Naive thymus-derived CD4-positive, alpha-beta T cell (primary cell): ENCODE measurements at regions of chr7 and their contacts with region 1.

Region 1: DNA sequence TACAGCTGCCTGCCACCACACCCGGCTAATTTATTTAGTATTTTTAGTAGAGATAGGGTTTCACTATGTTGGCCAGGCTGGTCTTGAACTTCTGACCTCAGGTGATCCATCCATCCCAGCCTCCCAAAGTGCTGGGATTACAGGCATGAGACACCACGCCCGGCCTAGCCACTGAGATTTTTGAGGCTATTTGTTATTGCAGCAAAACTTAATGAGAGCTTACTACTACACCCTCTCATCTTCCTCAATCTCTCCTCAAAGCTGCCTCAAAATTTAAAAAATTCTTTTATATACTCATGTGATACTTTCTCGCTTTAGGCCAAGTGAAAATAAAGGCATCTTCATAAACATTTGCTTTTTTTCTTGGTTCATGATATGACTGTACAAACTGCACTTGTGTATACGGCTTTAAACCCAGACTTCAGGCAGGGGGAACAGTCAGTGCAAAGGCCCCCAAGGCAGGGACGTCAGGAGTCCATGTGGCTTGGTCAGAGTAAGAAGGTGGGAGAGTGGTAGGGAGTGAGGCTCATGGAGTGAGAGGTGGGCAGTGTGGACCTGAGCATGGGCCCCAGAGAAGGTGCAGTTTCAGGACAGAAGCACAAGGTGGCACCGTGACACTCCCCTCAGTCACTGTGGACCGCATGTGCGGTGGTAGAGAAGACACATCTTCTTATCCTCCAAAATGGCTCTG is 55.5 kb downstream of the SYPL1 start:
- DNase-seq: peak; percentile 42 to 76 (median 68)
- ATAC-seq: peak; percentile 97
- H3K4me3 ChIP-seq: no peak overlapping the region
- H3K4me3 Mint-ChIP-seq: peak overlapping the region in 3 of 10 donors; percentile 38 to 66 (median 49)
- H3K27ac ChIP-seq: no peak overlapping the region
- H3K27ac Mint-ChIP-seq: peak overlapping the region in 5 of 9 donors; percentile 6 to 56 (median 28)
- H3K4me1 ChIP-seq: peaks cover 0 to 12% of the 10 kb centered on the region in 2 donors
- H3K4me1 Mint-ChIP-seq: peaks cover 10 to 30% (median 19%) of the 10 kb centered on the region in 7 donors
- H3K27me3 ChIP-seq: no peaks in the 10 kb centered on the region
- H3K27me3 Mint-ChIP-seq: peaks cover 0 to 18% (median 0%) of the 10 kb centered on the region in 5 donors

Region 2: DNA sequence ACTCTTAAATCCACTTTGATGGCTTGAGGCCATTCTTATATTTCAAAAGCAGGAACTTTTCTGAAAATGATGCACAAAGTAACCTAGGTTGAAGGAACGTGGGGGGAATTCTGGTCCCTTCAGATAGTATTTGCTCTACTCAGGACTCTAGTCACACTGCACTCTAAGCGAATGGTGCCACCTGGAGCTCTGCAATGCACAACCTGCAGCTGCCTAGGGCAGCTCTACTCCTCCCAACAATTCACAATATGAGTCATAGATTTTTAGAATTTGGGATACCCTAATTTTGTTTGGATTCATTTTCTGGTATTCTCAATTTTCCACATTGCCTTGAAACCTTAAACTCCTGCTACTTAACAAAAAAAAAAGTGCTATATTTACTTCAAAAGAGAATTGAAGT is 38.1 kb after region 1 on chr7:
- CTCF ChIA-PET with region 1: interaction called, 4 read pairs
- POLR2A ChIA-PET with region 1: no interaction called
- intact Hi-C with region 1: loop called in 1 of 2 experiments (anchors 1 kb)
- DNase-seq: no peak
- ATAC-seq: no peak
- H3K4me3 ChIP-seq: no peak overlapping the region
- H3K4me3 Mint-ChIP-seq: no peak overlapping the region
- H3K27ac ChIP-seq: no peak overlapping the region
- H3K27ac Mint-ChIP-seq: peak overlapping the region in 2 of 9 donors; percentile 15 to 68
- H3K4me1 ChIP-seq: no peaks in the 10 kb centered on the region
- H3K4me1 Mint-ChIP-seq: peaks cover 4 to 19% (median 11%) of the 10 kb centered on the region in 7 donors
- H3K27me3 ChIP-seq: no peaks in the 10 kb centered on the region
- H3K27me3 Mint-ChIP-seq: no peaks in the 10 kb centered on the region

Region 3: DNA sequence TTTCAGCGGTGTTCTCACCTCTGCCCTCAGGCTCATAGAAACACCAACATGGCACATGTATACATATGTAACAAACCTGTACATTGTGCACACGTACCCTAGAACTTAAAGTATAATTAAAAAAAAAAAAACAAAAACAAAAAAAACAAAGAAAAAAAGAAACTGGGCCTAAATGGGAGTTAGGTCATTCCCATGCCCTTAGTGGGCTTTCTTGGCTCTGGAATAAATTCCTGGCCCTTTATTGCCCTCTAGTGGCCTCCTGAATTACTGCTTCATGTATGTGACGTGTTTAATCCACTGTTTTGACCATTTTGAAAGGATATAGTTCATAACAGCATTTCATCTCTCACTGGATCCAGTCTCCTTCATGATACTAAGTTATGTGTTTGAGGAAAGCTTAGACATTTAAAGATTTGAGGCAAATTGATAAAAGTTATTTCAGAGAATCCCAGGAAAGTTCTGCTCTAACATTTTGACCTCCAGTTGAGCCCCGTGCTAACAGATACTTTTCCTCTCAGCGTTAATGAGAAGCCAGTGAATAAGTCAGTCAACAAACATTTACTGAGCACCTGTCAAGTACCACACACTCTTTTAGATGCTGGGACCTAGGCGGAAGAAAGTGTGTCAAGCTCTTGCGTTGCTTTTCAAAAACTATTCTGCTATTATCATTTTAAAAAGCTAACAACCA is 110.1 kb after region 1 on chr7:
- CTCF ChIA-PET with region 1: interaction called, 15 read pairs
- POLR2A ChIA-PET with region 1: no interaction called
- intact Hi-C with region 1: loop called (anchors 1 kb)
- DNase-seq: peak in 6 of 9 donors; percentile 19 to 36 (median 27)
- ATAC-seq: peak; percentile 68
- H3K4me3 ChIP-seq: no peak overlapping the region
- H3K4me3 Mint-ChIP-seq: no peak overlapping the region
- H3K27ac ChIP-seq: no peak overlapping the region
- H3K27ac Mint-ChIP-seq: no peak overlapping the region
- H3K4me1 ChIP-seq: no peaks in the 10 kb centered on the region
- H3K4me1 Mint-ChIP-seq: peaks cover 0 to 3% (median 0%) of the 10 kb centered on the region in 7 donors
- H3K27me3 ChIP-seq: no peaks in the 10 kb centered on the region
- H3K27me3 Mint-ChIP-seq: peaks cover 0 to 27% (median 5%) of the 10 kb centered on the region in 5 donors

Region 4: GRCh38 chr7:106309362-106309761 is 252.7 kb after region 1 on chr7:
- CTCF ChIA-PET with region 1: no interaction called
- POLR2A ChIA-PET with region 1: no interaction called
- intact Hi-C with region 1: no loop called
- DNase-seq: no peak
- ATAC-seq: no peak
- H3K4me3 ChIP-seq: no peak overlapping the region
- H3K4me3 Mint-ChIP-seq: no peak overlapping the region
- H3K27ac ChIP-seq: no peak overlapping the region
- H3K27ac Mint-ChIP-seq: no peak overlapping the region
- H3K4me1 ChIP-seq: no peaks in the 10 kb centered on the region
- H3K4me1 Mint-ChIP-seq: peaks cover 0 to 7% (median 0%) of the 10 kb centered on the region in 7 donors
- H3K27me3 ChIP-seq: no peaks in the 10 kb centered on the region
- H3K27me3 Mint-ChIP-seq: peaks cover 0 to 28% (median 15%) of the 10 kb centered on the region in 5 donors